Activated T-helper 1 cell treated with anti-CD3 and anti-CD28 coated beads, Interleukin-12 subunit alpha, Interleukin-12 subunit beta, Interleukin-2, Interleukin-4 antibody, amounts not matched to agents 30 ng/mL and 10 ng/mL and 1 ng/mL, durations not matched to agents 14 hours and 24 hours and 36 hours (primary cell): ENCODE measurements at regions of chr11 and their contacts with region 1.

Region 1: DNA sequence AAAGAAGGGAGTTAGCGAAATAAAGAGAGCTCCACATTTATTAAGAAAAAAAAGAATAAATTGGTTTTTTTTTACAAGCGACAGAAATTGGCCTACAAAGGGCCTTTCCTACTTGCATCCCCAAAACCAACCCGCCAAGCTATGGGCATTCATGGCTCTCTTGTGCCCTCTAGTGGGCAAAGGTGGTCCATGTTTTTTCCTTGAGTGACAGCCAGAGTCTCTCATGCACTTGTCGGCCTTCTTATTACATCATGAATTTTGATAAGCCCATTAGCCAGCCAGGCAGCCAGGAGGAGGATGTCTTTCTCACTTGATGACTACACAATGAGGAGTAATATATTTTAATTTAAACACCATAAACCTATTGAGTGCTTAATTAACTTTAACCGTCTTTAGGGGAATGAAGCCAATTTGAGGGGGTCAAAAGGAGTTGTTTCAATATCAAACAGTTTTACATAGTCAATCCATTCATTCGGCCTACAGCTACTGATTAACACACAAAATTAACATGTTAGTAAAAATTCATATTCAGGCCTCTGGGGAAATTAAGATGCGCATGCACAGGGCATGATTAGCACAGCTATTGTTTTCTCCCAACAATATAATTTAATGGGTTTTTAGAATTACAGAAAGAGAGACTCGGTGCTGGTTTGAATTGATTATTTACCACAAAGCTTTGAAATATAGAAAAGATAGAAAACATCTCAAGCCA is 85.5 kb downstream of the RCN1 start:
- DNase-seq: peak; percentile 70
- H3K4me3 Mint-ChIP-seq: no peak overlapping the region
- H3K27ac Mint-ChIP-seq: no peak overlapping the region
- H3K4me1 Mint-ChIP-seq: peaks cover 4% of the 10 kb centered on the region
- H3K27me3 Mint-ChIP-seq: peaks cover 2% of the 10 kb centered on the region

Region 2: DNA sequence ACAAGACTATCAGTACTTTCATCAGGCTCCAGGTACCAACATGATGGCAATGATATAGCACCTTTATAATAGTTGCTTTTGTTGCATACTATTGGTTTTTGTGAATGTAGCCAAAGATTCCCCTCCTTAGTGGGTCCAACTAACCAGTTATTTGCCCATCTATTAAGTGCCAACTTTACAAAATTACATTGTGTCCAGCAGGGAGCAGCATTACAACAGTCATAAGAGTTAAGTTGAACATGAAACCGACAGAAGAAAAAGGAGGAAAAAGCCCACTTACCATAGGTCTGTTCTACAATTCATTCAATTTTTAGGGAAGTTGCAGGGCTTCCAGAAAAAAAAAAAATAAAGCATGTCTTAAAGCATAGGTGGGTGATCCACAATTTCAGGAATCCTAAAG is 688.5 kb before region 1 on chr11:
- intact Hi-C with region 1: loop called (anchors 10 kb)
- DNase-seq: no peak
- H3K4me3 Mint-ChIP-seq: no peak overlapping the region
- H3K27ac Mint-ChIP-seq: no peak overlapping the region
- H3K4me1 Mint-ChIP-seq: peaks cover 6% of the 10 kb centered on the region
- H3K27me3 Mint-ChIP-seq: no peaks in the 10 kb centered on the region

Region 3: GRCh38 chr11:31817621-31818424 is 358.6 kb before region 1 on chr11:
- intact Hi-C with region 1: no loop called
- DNase-seq: no peak
- H3K4me3 Mint-ChIP-seq: no peak overlapping the region
- H3K27ac Mint-ChIP-seq: no peak overlapping the region
- H3K4me1 Mint-ChIP-seq: peaks cover 9% of the 10 kb centered on the region
- H3K27me3 Mint-ChIP-seq: peaks cover 77% of the 10 kb centered on the region

Region 4: DNA sequence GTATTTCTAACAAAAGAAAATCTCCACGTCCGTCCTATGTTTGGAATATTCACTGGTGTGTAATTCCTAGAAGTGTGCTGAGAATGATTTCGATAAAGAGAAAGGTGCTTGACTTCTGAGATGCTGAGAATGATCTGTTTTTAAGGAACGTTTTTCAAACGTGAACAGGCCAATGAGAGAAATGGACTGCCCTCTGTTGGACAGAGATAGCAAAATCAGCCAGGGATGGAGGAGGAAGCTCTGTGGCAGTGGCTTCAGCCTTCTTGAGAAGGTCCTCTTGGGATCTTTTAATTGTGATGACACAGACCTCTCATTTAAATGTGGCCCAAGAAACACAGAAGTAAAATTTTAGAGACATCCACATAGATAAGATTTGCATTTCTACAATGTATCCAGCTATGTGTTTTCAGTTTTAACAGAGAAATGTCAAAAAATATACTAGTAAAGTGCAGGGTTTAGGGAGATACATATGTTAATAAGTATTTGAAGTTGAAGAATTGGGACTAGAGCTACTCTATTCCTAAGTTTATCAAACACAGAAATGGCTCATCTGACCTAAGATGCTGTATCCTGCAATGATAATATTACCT is 169.5 kb before region 1 on chr11:
- intact Hi-C with region 1: loop called (anchors 1 kb)
- DNase-seq: no peak
- H3K4me3 Mint-ChIP-seq: no peak overlapping the region
- H3K27ac Mint-ChIP-seq: no peak overlapping the region
- H3K4me1 Mint-ChIP-seq: no peaks in the 10 kb centered on the region
- H3K27me3 Mint-ChIP-seq: peaks cover 17% of the 10 kb centered on the region

Region 5: GRCh38 chr11:32052218-32052617 is 124.2 kb before region 1 on chr11:
- intact Hi-C with region 1: loop called (anchors 1 kb)
- DNase-seq: peak; percentile 28
- H3K4me3 Mint-ChIP-seq: no peak overlapping the region
- H3K27ac Mint-ChIP-seq: no peak overlapping the region
- H3K4me1 Mint-ChIP-seq: no peaks in the 10 kb centered on the region
- H3K27me3 Mint-ChIP-seq: peaks cover 21% of the 10 kb centered on the region

Region 6: GRCh38 chr11:32225571-32226285 is 49.3 kb after region 1 on chr11:
- intact Hi-C with region 1: no loop called
- DNase-seq: no peak
- H3K4me3 Mint-ChIP-seq: no peak overlapping the region
- H3K27ac Mint-ChIP-seq: no peak overlapping the region
- H3K4me1 Mint-ChIP-seq: no peaks in the 10 kb centered on the region
- H3K27me3 Mint-ChIP-seq: peaks cover 2% of the 10 kb centered on the region

Region 7: GRCh38 chr11:32297611-32298011 is 121.2 kb after region 1 on chr11:
- intact Hi-C with region 1: loop called (anchors 1 kb)
- DNase-seq: no peak
- H3K4me3 Mint-ChIP-seq: no peak overlapping the region
- H3K27ac Mint-ChIP-seq: no peak overlapping the region
- H3K4me1 Mint-ChIP-seq: no peaks in the 10 kb centered on the region
- H3K27me3 Mint-ChIP-seq: no peaks in the 10 kb centered on the region